CD4-positive, alpha-beta T cell (primary cell): ENCODE measurements at regions of chr11 and their contacts with region 1.

Region 1: DNA sequence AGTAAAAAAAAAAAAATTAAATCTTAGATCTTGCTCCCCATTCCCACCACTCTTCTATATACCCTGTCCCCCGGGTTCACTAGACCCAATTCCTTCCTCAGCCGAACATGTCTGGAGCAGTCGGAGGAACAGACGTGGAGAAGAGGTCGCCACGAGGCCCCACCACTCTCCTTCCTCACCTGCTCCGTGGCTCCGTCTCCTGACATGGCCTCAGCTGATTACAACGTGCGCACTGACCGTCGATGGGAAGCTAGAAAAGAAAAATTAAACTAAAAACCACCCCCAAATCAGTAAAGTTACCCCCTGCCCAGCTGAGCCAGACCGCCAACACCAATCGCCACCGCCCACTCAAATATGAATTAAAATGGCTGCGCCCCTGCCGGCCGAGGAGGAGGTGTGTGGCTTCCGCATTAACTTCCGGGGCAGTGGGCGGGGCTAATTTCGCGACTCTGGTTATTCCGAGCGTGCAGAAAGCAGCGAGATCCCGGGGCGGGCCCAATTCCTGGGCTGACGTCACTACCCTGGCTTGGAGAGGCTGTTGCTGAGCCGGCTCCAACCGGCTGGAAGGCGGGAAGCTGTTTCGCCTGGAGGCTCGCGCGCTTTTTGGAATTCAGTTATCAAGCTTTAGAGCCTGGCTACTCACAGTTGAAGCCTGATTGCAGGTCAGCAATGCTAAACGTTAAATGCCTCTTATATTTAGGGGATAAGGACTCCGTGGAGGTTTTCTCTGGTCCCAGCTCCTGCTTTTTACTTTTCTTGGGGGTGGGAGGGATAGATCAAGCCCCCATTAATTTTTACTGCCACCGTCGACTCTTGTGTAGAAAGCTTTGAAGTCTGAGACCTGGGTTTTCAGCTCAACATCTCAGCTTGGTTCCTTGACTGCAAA is at the start of gene CSTF3:
- DNase-seq: peak; percentile 87 to 98 (median 94)
- ATAC-seq: peak; percentile 94
- H3K4me3 ChIP-seq: peak within 1 kb of the TSS; percentile 99
- H3K4me3 Mint-ChIP-seq: peak within 1 kb of the TSS; percentile 99
- H3K27ac ChIP-seq: peak within 1 kb of the TSS; percentile 66 to 71
- H3K27ac Mint-ChIP-seq: peak within 1 kb of the TSS; percentile 92
- H3K4me1 ChIP-seq: peaks cover 19% of the 10 kb centered on the region
- H3K4me1 Mint-ChIP-seq: peaks cover 61% of the 10 kb centered on the region
- H3K27me3 ChIP-seq: no peaks in the 10 kb centered on the region
- H3K27me3 Mint-ChIP-seq: no peaks in the 10 kb centered on the region
- CTCF ChIP-seq: peak; percentile 47
- total RNA-seq, gene CSTF3: 6.4 to 9.9 TPM

Region 2: GRCh38 chr11:32583459-32584271 is 577.7 kb before region 1 on chr11 and contains the start of gene EIF3M:
- CTCF ChIA-PET with region 1: no interaction called
- POLR2A ChIA-PET with region 1: no interaction called
- intact Hi-C with region 1: loop called (anchors 2 to 5 kb)
- DNase-seq: peak; percentile 92 to 98 (median 95)
- ATAC-seq: peak; percentile 98
- H3K4me3 ChIP-seq: peak within 1 kb of the TSS; percentile 89
- H3K4me3 Mint-ChIP-seq: peak within 1 kb of the TSS; percentile 94
- H3K27ac ChIP-seq: peak within 1 kb of the TSS; percentile 84 to 87
- H3K27ac Mint-ChIP-seq: peak within 1 kb of the TSS; percentile 94
- H3K4me1 ChIP-seq: peaks cover 38% of the 10 kb centered on the region
- H3K4me1 Mint-ChIP-seq: peaks cover 52% of the 10 kb centered on the region
- H3K27me3 ChIP-seq: no peaks in the 10 kb centered on the region
- H3K27me3 Mint-ChIP-seq: no peaks in the 10 kb centered on the region
- CTCF ChIP-seq: no peak
- total RNA-seq, gene EIF3M: 260 to 264 TPM

Region 3: DNA sequence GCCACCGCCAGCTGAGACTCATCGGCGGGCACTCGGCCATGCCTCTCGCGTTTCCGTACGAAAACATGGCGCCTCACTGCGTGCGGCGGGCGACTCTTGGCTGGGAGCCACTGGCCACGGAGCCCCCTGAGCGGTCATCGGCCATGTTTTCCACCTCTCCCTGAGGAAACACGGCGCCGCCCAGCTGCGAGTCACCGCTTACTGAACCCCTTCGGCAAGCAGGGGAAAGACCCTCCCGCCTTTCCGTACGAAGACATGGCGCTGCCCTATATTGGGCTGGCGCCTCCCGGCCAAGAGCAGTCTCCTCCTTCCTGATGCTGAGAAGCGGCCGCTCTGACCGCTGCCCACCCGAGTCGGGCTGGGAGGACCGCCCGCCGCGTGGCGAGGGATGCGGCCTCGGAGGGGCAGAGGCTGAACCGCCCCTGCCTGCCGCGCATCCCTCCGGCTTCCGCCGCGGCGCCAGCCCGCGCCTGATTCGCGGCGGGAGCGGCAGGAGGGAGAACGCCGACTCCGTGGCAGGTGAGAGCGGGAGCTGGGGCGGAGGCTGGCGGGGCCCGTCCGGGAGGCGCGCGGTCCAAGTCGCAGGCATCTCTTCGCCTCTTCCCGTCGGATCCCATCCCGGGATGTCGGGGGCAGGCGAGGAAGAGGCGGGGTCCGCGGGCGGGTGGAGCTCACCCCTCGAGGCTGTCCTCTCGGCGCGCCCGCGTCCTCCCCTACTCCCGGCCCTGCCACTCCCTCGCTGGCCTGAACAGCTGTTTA is 121.9 kb before region 1 on chr11 and contains the start of gene TCP11L1:
- CTCF ChIA-PET with region 1: no interaction called
- POLR2A ChIA-PET with region 1: interaction called, 11 read pairs
- intact Hi-C with region 1: loop called in 1 of 2 experiments (anchors 5 kb)
- DNase-seq: peak; percentile 66 to 91 (median 78)
- ATAC-seq: peak; percentile 85
- H3K4me3 ChIP-seq: peak within 1 kb of the TSS; percentile 99
- H3K4me3 Mint-ChIP-seq: peak within 1 kb of the TSS; percentile 98
- H3K27ac ChIP-seq: peak within 1 kb of the TSS; percentile 62 to 90
- H3K27ac Mint-ChIP-seq: peak within 1 kb of the TSS; percentile 95
- H3K4me1 ChIP-seq: peaks cover 17% of the 10 kb centered on the region
- H3K4me1 Mint-ChIP-seq: peaks cover 17% of the 10 kb centered on the region
- H3K27me3 ChIP-seq: no peaks in the 10 kb centered on the region
- H3K27me3 Mint-ChIP-seq: peaks cover 5% of the 10 kb centered on the region
- CTCF ChIP-seq: no peak
- total RNA-seq, gene TCP11L1: 9.8 to 11.9 TPM

Region 4: GRCh38 chr11:33257897-33258630 is 96.7 kb after region 1 on chr11:
- CTCF ChIA-PET with region 1: no interaction called
- POLR2A ChIA-PET with region 1: interaction called, 6 read pairs
- intact Hi-C with region 1: loop called (anchors 2 kb)
- DNase-seq: peak; percentile 58 to 89 (median 71)
- ATAC-seq: peak; percentile 68
- H3K4me3 ChIP-seq: peak overlapping the region; percentile 88
- H3K4me3 Mint-ChIP-seq: peak overlapping the region; percentile 97
- H3K27ac ChIP-seq: peak overlapping the region; percentile 94 to 97
- H3K27ac Mint-ChIP-seq: peak overlapping the region; percentile 94
- H3K4me1 ChIP-seq: peaks cover 15% of the 10 kb centered on the region
- H3K4me1 Mint-ChIP-seq: peaks cover 55% of the 10 kb centered on the region
- H3K27me3 ChIP-seq: no peaks in the 10 kb centered on the region
- H3K27me3 Mint-ChIP-seq: no peaks in the 10 kb centered on the region
- CTCF ChIP-seq: no peak

Region 5: DNA sequence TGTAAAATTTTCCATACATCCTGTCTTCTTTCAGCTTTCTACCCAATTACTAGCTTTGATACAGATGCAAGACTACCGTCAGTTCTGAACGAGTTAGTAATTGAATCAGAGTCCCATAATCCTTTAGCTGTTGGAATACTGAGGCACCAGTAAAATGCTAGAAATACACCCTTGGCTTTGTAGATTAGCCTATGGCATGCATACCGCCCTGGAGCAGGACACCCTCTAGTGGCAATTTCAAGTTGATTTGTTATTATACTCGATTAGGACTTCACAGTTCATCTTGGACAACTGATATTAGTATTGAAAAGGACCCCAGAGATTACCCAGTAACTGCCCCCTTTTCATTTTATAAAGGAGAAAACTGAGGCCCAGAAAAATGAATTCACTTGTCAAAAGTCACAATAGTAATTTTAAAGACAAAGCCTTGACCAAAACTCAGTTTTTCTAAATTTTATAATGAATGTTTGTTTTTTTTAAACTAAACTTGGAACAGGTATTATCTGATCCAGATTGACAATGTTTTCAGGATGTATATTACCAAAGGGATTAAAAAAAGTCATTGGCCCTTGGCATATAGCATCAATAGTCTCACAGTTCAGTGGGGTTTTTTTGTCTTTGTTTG is 168.5 kb after region 1 on chr11:
- CTCF ChIA-PET with region 1: interaction called, 3 read pairs
- POLR2A ChIA-PET with region 1: no interaction called
- intact Hi-C with region 1: loop called in 1 of 2 experiments (anchors 1 kb)
- DNase-seq: peak in 13 of 14 experiments; percentile 12 to 75 (median 38)
- ATAC-seq: peak; percentile 78
- H3K4me3 ChIP-seq: no peak overlapping the region
- H3K4me3 Mint-ChIP-seq: no peak overlapping the region
- H3K27ac ChIP-seq: no peak overlapping the region
- H3K27ac Mint-ChIP-seq: peak overlapping the region; percentile 5
- H3K4me1 ChIP-seq: no peaks in the 10 kb centered on the region
- H3K4me1 Mint-ChIP-seq: peaks cover 35% of the 10 kb centered on the region
- H3K27me3 ChIP-seq: no peaks in the 10 kb centered on the region
- H3K27me3 Mint-ChIP-seq: no peaks in the 10 kb centered on the region
- CTCF ChIP-seq: peak; percentile 73

Region 6: GRCh38 chr11:33500861-33501479 is 339.6 kb after region 1 on chr11:
- CTCF ChIA-PET with region 1: no interaction called
- POLR2A ChIA-PET with region 1: no interaction called
- intact Hi-C with region 1: no loop called
- DNase-seq: no peak
- ATAC-seq: no peak
- H3K4me3 ChIP-seq: no peak overlapping the region
- H3K4me3 Mint-ChIP-seq: no peak overlapping the region
- H3K27ac ChIP-seq: no peak overlapping the region
- H3K27ac Mint-ChIP-seq: no peak overlapping the region
- H3K4me1 ChIP-seq: no peaks in the 10 kb centered on the region
- H3K4me1 Mint-ChIP-seq: no peaks in the 10 kb centered on the region
- H3K27me3 ChIP-seq: peaks cover 0 to 7% of the 10 kb centered on the region in 2 experiments
- H3K27me3 Mint-ChIP-seq: peaks cover 13% of the 10 kb centered on the region
- CTCF ChIP-seq: no peak

Region 7: DNA sequence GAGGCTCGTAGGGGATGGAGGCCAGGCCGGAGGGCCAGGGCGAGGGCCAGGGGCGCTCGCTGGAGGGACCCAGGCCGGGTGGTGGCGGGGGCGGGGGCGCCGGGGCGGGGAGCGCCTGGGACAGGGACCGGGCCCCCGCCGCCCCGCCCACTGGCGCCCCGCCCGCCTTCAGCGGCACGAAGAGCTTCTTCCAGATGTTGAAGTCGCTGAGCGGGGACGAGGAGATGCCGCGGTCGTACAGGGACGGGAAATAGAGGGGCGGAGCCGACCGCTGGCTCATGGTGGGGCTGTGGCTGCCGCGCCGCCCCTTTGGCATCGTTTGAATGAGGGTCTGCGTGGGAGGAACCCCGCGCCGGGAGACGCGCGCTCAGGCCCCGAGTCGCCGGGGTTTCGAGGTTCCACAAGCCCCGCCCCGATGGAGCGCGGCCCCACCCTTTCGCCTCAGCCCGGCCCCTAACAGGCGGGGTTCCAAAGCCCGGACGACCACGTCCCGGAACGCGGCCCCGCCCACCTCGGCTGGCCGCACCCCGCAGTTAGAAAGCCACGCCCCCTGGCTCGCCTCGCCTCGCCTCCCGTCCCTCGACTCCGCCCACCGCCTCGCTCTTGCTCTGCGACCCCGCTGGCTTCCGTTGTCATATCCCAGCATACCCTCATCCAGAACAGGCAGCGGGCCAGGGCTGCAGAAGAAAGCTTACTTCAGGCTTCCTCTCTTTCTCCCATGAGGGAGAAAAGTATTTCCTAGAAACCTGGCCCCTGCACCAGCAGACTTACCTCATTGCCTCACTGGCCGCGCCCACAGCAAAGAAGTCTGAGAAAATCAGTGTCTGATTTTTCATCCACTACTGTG is 539.3 kb after region 1 on chr11 and contains the start of gene C11orf91:
- CTCF ChIA-PET with region 1: no interaction called
- POLR2A ChIA-PET with region 1: no interaction called
- intact Hi-C with region 1: loop called in 1 of 2 experiments (anchors 5 kb)
- DNase-seq: peak; percentile 84 to 98 (median 94)
- ATAC-seq: peak; percentile 93
- H3K4me3 ChIP-seq: peak within 1 kb of the TSS; percentile 68
- H3K4me3 Mint-ChIP-seq: peak within 1 kb of the TSS; percentile 95
- H3K27ac ChIP-seq: no peak within 1 kb of the TSS
- H3K27ac Mint-ChIP-seq: peak within 1 kb of the TSS; percentile 64
- H3K4me1 ChIP-seq: peaks cover 14% of the 10 kb centered on the region
- H3K4me1 Mint-ChIP-seq: peaks cover 33% of the 10 kb centered on the region
- H3K27me3 ChIP-seq: no peaks in the 10 kb centered on the region
- H3K27me3 Mint-ChIP-seq: peaks cover 10% of the 10 kb centered on the region
- CTCF ChIP-seq: no peak
- total RNA-seq, gene C11orf91: 0.45 TPM in 1 of 2 experiments, not detected in the other

Region 8: DNA sequence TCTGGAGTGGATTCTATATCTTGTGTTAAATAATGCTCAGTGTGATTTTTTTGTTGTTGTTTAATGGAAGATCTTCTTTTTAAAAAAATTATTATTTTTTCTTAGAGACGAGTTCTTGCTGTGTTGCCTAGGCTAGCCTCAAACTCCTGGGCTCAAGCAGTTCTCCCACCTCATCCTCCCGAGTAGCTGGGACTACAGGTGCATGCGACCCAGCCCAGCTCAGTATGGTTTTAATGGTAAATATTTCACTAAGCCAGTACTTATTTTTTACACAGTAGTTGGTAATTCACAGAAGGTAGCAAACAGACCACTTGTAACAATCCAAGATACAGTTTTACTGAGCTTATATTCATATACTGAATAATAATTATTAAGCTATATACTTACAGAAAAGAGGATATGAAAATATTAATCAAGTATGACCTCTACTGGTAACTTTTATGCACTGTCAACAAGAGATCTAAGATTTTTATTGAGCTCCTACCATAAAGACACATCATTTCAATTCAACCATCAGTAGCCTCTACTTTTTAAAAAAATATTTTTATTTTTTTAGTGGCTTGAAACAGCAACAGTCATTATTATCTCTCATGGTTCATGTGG is 581.0 kb after region 1 on chr11:
- CTCF ChIA-PET with region 1: no interaction called
- POLR2A ChIA-PET with region 1: interaction called, 4 read pairs
- intact Hi-C with region 1: loop called (anchors 10 kb)
- DNase-seq: peak in 3 of 14 experiments; percentile 45 to 49 (median 48)
- ATAC-seq: peak; percentile 71
- H3K4me3 ChIP-seq: no peak overlapping the region
- H3K4me3 Mint-ChIP-seq: no peak overlapping the region
- H3K27ac ChIP-seq: no peak overlapping the region
- H3K27ac Mint-ChIP-seq: peak overlapping the region; percentile 7
- H3K4me1 ChIP-seq: no peaks in the 10 kb centered on the region
- H3K4me1 Mint-ChIP-seq: no peaks in the 10 kb centered on the region
- H3K27me3 ChIP-seq: no peaks in the 10 kb centered on the region
- H3K27me3 Mint-ChIP-seq: no peaks in the 10 kb centered on the region
- CTCF ChIP-seq: peak; percentile 53

Region 9: DNA sequence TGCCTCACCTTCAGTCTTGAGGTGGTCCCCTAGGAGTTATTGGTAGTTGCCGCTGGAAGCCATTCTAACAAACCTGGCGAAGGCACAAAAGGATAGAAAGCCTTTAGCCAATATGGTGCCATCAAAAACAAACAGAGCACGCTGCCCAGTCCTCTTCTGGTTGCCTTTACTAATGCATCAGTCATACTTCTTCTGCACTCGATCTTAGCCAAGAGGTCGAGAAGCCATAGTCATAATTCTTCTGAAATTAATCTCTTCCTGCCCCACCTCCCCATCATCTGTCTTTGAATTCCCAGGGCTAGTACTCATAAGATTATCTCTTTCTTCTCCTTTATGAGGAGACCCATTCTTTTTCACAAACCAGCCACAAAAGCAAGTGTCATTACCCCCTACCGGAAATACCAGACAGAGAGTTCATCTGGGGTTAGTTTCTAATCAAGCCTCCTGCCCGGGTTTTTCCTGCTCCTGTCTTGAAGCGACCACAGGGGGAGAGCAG is 1438.1 kb after region 1 on chr11:
- CTCF ChIA-PET with region 1: no interaction called
- POLR2A ChIA-PET with region 1: no interaction called
- intact Hi-C with region 1: no loop called
- DNase-seq: no peak
- ATAC-seq: no peak
- H3K4me3 ChIP-seq: no peak overlapping the region
- H3K4me3 Mint-ChIP-seq: no peak overlapping the region
- H3K27ac ChIP-seq: no peak overlapping the region
- H3K27ac Mint-ChIP-seq: no peak overlapping the region
- H3K4me1 ChIP-seq: no peaks in the 10 kb centered on the region
- H3K4me1 Mint-ChIP-seq: peaks cover 8% of the 10 kb centered on the region
- H3K27me3 ChIP-seq: peaks cover 0 to 1% of the 10 kb centered on the region in 2 experiments
- H3K27me3 Mint-ChIP-seq: peaks cover 3% of the 10 kb centered on the region
- CTCF ChIP-seq: no peak